ENCODE measurements at regions of chr16 and their contacts with region 1.

Region 1: DNA sequence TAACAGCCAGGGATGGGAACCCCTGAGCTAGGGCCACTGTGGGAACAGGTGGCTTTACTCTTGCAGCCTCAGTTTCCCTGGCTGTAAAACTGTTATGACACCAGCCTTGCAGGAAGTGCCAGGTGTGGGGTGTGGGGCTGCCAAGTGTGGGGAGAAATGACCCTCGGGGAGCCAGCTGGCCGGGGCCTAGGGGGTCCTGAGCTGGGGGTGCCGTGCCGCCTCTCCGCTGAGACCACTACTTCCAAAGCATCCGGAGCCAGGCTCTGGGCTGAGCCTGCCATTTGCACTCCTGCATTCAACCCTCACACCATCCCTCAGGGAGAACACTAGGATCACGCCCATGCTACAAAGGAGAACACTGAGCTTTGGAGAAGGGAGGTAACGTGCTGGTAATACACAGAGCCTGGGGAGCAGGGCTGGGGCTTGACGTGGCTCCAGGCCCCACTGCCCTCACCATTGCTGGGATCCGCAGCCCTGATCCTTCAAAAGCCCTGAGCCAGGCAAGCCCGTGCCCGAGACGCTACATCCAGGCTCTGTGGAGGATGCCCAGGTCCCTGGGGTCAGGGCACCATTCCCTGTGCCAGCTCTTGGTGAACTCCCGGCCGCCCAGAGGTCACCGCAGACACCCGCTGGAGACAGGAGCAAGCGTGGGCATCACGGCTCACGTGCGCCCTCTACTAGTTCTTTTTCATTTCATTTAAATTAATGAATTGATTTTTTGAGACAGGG is 28.8 kb upstream of the GINS2 start:
- DNase-seq: peak; percentile 79
- H3K4me3 Mint-ChIP-seq: no peak overlapping the region
- H3K27ac Mint-ChIP-seq: no peak overlapping the region
- H3K4me1 Mint-ChIP-seq: no peaks in the 10 kb centered on the region
- H3K27me3 Mint-ChIP-seq: peaks cover 19% of the 10 kb centered on the region
- CTCF ChIP-seq: peak; percentile 80

Region 2: DNA sequence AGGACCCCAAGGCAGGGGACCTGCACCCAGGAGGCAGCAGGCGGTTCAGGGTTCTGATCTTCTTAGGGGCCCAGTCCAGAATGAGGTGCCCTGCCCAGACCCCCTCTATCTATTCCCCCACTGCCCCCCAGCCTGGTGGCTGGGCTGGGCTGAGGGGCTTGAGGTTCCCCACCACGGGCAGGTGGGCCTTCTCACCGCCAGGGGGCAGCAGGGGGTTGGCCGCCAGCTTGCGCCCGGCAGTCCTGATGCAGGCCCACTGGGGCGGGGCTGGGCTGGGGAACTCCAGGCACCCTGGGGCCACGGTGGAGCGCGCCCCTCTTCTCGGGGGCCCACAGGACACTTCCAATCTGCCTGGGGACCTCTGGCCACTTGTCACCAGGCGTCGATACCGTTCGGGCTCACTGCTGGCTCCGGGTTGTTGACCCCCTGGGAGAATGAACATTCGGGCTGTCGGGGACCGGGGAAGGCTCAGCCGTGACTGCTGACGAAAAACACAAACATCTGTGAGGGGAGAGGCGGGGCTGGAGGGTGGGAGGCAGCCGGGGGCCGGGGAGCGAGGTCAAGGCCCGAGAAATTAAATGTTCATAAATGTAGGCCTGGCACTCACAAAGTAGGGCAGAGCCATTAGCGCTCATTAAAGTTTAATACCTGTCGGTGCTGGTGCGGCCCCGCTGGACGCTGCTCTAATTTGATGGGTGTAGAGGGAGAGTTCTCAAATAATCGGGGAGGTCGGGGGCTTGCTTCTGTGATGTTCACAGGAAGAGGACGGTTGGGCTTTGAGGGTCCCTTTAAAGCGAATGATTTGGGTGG is 323.7 kb before region 1 on chr16:
- CTCF ChIA-PET with region 1: no interaction called
- intact Hi-C with region 1: loop called (anchors 10 kb)
- DNase-seq: peak; percentile 86
- H3K4me3 Mint-ChIP-seq: no peak overlapping the region
- H3K27ac Mint-ChIP-seq: no peak overlapping the region
- H3K4me1 Mint-ChIP-seq: peaks cover 11% of the 10 kb centered on the region
- H3K27me3 Mint-ChIP-seq: peaks cover 77% of the 10 kb centered on the region
- CTCF ChIP-seq: peak; percentile 98

Region 3: GRCh38 chr16:85437166-85438055 is 280.1 kb before region 1 on chr16:
- CTCF ChIA-PET with region 1: interaction called, 10 read pairs
- intact Hi-C with region 1: no loop called
- DNase-seq: peak; percentile 48
- H3K4me3 Mint-ChIP-seq: no peak overlapping the region
- H3K27ac Mint-ChIP-seq: no peak overlapping the region
- H3K4me1 Mint-ChIP-seq: peaks cover 9% of the 10 kb centered on the region
- H3K27me3 Mint-ChIP-seq: peaks cover 75% of the 10 kb centered on the region
- CTCF ChIP-seq: no peak

Region 4: DNA sequence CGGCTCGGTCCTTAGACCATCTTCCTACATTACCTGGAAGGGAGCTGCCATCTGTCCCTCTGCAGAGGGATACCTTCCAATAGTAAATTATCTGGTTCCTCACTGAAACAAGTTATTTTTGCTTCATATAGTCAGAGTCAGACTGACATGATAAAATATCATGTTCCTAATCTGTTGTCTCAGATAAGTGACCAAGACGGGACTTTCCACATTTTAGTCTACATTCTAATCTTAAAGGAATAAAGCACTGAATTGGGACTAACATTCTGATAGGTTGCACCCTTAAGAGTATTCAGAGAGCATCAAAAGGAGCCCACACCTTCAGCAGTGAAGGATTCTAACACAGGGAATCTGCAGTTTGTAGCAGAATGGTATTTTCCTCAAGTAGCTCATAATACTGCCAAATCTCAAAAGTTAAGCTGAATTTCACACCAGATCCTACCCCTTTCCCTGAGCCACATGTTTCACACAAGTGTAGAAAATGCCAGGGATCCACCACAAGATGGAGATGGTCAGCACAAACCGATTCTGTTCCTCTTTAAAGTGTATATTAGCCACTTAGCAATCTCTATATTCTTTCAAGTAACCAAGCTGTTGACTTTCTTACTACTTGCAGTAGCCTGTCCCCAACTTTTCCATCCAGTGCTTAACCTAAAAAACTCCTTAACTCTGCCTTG is 42.2 kb before region 1 on chr16:
- CTCF ChIA-PET with region 1: no interaction called
- intact Hi-C with region 1: loop called (anchors 1 kb)
- DNase-seq: no peak
- H3K4me3 Mint-ChIP-seq: no peak overlapping the region
- H3K27ac Mint-ChIP-seq: no peak overlapping the region
- H3K4me1 Mint-ChIP-seq: peaks cover 16% of the 10 kb centered on the region
- H3K27me3 Mint-ChIP-seq: no peaks in the 10 kb centered on the region
- CTCF ChIP-seq: peak; percentile 36

Region 5: GRCh38 chr16:85688586-85689284 is 28.8 kb before region 1 on chr16 and contains the start of gene GINS2:
- CTCF ChIA-PET with region 1: no interaction called
- intact Hi-C with region 1: no loop called
- DNase-seq: peak; percentile 97
- H3K4me3 Mint-ChIP-seq: peak within 1 kb of the TSS; percentile 65
- H3K27ac Mint-ChIP-seq: no peak within 1 kb of the TSS
- H3K4me1 Mint-ChIP-seq: no peaks in the 10 kb centered on the region
- H3K27me3 Mint-ChIP-seq: peaks cover 32% of the 10 kb centered on the region
- CTCF ChIP-seq: no peak
- total RNA-seq, gene GINS2: 19.7 and 25.2 TPM in 2 replicates

Region 6: GRCh38 chr16:85750827-85751697 is 33.5 kb after region 1 on chr16 and contains the start of gene C16orf74:
- CTCF ChIA-PET with region 1: no interaction called
- intact Hi-C with region 1: loop called (anchors 2 kb)
- DNase-seq: peak; percentile 51
- H3K4me3 Mint-ChIP-seq: peak within 1 kb of the TSS; percentile 91
- H3K27ac Mint-ChIP-seq: no peak within 1 kb of the TSS
- H3K4me1 Mint-ChIP-seq: peaks cover 41% of the 10 kb centered on the region
- H3K27me3 Mint-ChIP-seq: peaks cover 43% of the 10 kb centered on the region
- CTCF ChIP-seq: no peak
- total RNA-seq, gene C16orf74: 2.2 and 3.4 TPM in 2 replicates

Measured in Calu3 (cell line).